Body of pancreas (tissue), 4 donors: ENCODE measurements at regions of chr15 and their contacts with region 1.

Region 1: DNA sequence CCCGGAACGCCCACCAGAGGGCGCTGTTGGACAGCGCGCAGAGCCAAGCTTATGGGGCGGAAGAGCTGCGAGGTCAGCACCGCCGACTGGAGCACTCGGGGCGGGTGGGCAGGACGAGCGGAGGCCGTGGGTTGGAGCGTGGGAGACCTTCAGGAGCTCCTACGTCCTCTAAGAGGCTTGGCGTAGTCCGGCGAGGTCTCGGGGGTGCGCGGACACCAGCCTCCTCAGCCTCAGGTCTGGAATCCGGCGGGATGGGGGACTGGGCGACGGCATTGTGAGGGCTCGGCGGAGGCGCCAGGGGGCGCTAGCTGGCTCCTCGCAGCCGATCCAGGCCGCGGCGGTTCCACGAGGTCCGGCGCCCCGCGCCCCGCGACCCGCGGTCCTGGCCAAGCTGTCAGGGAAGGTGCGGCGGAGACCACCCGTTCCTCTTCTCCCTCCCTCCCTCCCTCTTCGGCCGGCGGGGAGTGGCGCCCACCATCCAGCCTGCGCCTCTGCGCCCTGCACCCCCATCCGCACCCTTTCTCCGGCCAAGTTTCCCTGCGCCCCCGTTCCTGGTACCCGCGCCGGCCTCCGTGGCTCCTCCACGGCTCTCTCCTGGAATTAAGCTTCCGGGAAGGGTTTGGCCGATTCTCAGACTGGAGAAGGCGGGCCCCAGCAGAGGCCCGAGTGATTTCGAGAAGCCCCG is 24.3 kb upstream of the POLG start:
- DNase-seq: peak; percentile 74 to 83 (median 76)
- ATAC-seq: peak; percentile 81
- H3K4me3 ChIP-seq: no peak overlapping the region
- H3K27ac ChIP-seq: no peak overlapping the region
- H3K4me1 ChIP-seq: peaks cover 36% of the 10 kb centered on the region
- H3K27me3 ChIP-seq: peaks cover 0 to 33% of the 10 kb centered on the region in 2 donors
- CTCF ChIP-seq: peak; percentile 92 to 99 (median 97)
- POLR2A ChIP-seq: no peak

Region 2: GRCh38 chr15:89282631-89283030 is 76.3 kb before region 1 on chr15:
- intact Hi-C with region 1: no loop called
- DNase-seq: no peak
- ATAC-seq: no peak
- H3K4me3 ChIP-seq: no peak overlapping the region
- H3K27ac ChIP-seq: no peak overlapping the region
- H3K4me1 ChIP-seq: no peaks in the 10 kb centered on the region
- H3K27me3 ChIP-seq: no peaks in the 10 kb centered on the region
- CTCF ChIP-seq: no peak
- POLR2A ChIP-seq: no peak

Region 3: GRCh38 chr15:89416141-89416853 is 57.4 kb after region 1 on chr15:
- intact Hi-C with region 1: loop called (anchors 5 kb)
- DNase-seq: peak; percentile 64 to 81 (median 76)
- ATAC-seq: peak; percentile 83
- H3K4me3 ChIP-seq: no peak overlapping the region
- H3K27ac ChIP-seq: no peak overlapping the region
- H3K4me1 ChIP-seq: peaks cover 18% of the 10 kb centered on the region
- H3K27me3 ChIP-seq: peaks cover 0 to 24% of the 10 kb centered on the region in 2 donors
- CTCF ChIP-seq: peak; percentile 55 to 83 (median 75)
- POLR2A ChIP-seq: no peak

Region 4: GRCh38 chr15:89433686-89434085 is 74.8 kb after region 1 on chr15:
- intact Hi-C with region 1: loop called (anchors 2 kb)
- DNase-seq: peak in 1 of 4 donors; percentile 38
- ATAC-seq: no peak
- H3K4me3 ChIP-seq: no peak overlapping the region
- H3K27ac ChIP-seq: no peak overlapping the region
- H3K4me1 ChIP-seq: peaks cover 10% of the 10 kb centered on the region
- H3K27me3 ChIP-seq: no peaks in the 10 kb centered on the region
- CTCF ChIP-seq: no peak
- POLR2A ChIP-seq: no peak

Region 5: DNA sequence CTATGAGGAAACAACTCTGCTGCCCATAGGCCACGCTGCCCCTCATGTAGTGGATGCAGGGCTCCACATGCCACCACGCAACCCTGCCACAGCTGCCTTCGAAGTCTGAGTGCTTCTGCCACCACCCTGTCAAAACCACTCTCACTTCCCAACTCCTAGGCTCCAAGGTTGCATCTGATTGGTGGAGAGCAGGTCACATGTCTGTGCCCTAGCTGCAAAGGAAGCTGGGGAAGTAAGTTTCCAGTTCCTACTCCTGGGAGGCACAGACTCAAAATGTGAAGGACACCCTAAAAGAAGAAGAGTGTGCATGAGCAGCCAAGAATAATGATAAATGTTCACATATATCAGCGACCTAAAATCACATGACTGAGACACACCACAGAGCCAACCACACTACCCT is 184.5 kb after region 1 on chr15:
- intact Hi-C with region 1: no loop called
- DNase-seq: no peak
- ATAC-seq: no peak
- H3K4me3 ChIP-seq: no peak overlapping the region
- H3K27ac ChIP-seq: no peak overlapping the region
- H3K4me1 ChIP-seq: no peaks in the 10 kb centered on the region
- H3K27me3 ChIP-seq: no peaks in the 10 kb centered on the region
- CTCF ChIP-seq: no peak
- POLR2A ChIP-seq: no peak

Region 6: DNA sequence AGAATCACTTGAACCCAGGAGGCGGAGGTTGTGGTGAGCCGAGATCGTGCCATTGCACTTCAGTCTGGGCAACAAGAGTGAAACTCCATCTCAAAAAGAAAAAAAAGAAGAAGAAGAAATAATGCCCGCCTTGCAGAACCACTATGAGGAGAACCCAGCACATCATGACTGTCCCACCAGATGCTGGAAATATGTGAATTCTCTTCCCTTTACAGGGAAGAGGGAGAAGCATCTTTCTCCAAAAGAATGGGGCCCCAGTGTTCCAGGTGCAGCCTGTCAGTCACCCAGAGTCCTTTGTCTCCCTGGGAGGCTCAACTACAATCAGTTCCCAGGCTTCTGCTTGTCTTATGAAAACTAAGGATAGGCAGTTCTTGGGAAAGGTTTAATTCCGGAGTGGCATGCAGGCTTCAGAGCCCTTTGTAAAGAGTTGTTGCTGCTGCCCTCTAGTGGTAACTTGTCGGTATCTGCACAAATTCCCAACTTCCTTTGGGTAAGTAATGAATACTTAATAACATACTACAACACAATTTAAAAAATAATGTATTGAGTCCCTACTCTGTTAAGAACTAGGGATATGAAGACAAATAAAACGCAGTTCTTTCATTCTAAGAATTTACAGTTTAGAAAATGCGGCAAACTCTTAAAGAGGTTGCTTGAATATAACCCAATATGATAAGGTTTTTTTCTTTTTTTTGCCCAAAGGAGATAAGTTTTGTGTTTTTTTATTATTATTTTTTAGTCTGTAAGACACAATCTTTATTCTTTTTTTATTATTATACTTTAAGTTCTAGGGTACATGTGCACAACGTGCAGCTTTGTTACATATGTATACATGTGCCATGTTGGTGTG is 197.7 kb after region 1 on chr15:
- intact Hi-C with region 1: loop called (anchors 10 kb)
- DNase-seq: peak; percentile 65 to 74 (median 70)
- ATAC-seq: peak; percentile 74
- H3K4me3 ChIP-seq: no peak overlapping the region
- H3K27ac ChIP-seq: no peak overlapping the region
- H3K4me1 ChIP-seq: no peaks in the 10 kb centered on the region
- H3K27me3 ChIP-seq: no peaks in the 10 kb centered on the region
- CTCF ChIP-seq: peak; percentile 60 to 80 (median 69)
- POLR2A ChIP-seq: no peak

Region 7: DNA sequence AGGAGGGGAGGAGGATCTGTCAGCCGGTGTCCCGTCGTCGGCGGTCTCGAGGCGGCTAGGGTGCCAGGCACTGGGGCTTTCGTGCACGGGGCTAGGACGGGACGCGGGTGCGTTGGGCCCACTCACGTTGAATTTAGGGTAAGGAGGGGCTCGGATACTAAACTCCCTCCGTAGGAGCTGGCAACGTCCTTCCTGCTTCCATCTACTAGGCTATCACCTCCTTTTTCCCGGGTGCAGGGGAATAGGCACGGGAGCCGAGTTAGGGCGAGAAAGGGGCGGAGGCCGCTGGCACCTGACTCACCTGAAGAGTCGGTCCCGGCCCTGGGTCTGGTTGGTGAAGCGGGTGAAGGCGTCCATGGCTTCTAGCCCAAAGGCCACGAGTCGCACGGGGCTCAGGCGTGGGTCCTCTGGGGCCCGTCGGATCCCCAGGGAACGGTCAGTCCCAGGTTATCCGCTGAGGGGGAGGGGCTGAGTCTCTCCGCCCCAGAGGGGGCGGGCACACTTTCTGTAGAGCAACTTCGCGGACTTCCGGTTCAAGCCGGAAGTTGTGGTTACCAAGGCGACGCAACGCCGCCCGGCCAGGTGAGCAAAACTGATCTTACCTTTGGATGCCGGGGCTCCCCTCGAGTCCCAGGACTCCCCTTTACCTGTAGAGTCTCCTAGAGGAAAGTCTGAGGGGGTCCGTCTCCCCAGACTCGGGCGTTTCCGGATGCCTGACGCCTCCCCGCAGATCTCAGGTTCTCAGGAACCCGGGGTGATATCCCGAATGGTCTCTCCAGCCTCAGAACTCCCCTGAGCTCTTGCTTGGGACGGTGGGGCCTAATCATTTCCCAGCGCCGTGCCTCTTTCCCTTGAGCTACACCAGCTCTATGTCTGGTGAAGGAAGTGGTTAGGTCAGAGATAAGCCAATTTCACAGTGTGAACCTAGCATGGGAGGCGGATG is 331.6 kb after region 1 on chr15 and contains the starts of genes PEX11A and WDR93:
- intact Hi-C with region 1: no loop called
- DNase-seq: peak; percentile 89 to 96 (median 92)
- ATAC-seq: peak; percentile 96
- H3K4me3 ChIP-seq: peak within 1 kb of the TSS; percentile 5 to 54
- H3K27ac ChIP-seq: peak within 1 kb of the TSS; percentile 60 to 76 (median 70)
- H3K4me1 ChIP-seq: peaks cover 25% of the 10 kb centered on the region
- H3K27me3 ChIP-seq: no peaks in the 10 kb centered on the region
- CTCF ChIP-seq: no peak
- POLR2A ChIP-seq: peak; percentile 39 to 76 (median 75)
- total RNA-seq, gene PEX11A: 14.5 to 25.1 TPM
- total RNA-seq, gene WDR93: 0.66 TPM in 1 of 2 donors, not detected in the other